Endothelial cell of umbilical vein (primary cell): ENCODE measurements at regions of chr5 and their contacts with region 1.

Region 1: GRCh38 chr5:172714491-172715421 is 56.2 kb downstream of the DUSP1 start:
- DNase-seq: peak; percentile 74
- H3K4me3 ChIP-seq: no peak overlapping the region
- H3K27ac ChIP-seq: peak overlapping the region; percentile 81
- H3K4me1 ChIP-seq: peaks cover 20% of the 10 kb centered on the region
- H3K27me3 ChIP-seq: no peaks in the 10 kb centered on the region
- CTCF ChIP-seq: peak; percentile 80 to 90
- POLR2A ChIP-seq: no peak

Region 2: DNA sequence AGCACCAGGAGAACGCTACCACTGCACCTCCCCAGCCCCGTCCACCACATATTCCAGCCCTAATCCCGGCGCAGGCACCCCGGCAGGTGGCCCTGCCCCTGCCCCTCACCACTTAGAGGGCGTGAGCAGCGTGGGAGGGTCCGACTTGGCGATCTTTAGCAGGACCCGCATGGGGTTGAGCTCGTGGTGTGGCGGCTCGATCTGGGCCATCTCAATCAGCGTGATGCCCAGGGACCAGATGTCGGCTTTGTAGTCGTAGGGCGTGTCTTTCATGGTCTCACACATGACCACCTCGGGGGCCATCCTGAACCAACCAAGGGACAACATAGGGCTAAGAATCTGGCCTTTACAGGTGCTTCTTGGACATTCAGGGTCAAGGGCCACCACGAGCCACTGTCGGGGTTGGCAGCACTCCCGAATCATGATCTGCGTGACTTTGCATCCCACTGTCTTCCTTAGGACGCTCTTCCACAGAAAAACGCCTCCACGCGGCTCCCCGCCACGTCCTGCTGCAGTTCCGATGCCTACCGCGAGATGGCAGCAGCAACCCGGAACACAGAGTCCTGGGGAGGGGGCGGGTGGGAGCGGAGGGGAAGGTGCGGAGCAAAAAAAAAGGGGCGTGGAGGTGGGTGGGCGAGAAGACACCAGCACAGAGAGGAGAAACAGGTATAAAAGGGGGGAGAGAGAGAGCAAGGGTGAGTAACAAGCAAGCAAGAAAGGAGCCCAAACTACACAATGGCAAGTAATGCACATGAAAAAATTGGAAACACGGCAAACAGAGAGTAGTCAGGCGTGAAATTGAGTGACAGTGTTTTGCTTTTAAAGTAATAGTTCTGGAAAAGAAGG is 608.0 kb before region 1 on chr5:
- CTCF ChIA-PET with region 1: no interaction called
- POLR2A ChIA-PET with region 1: no interaction called
- dilution Hi-C with region 1: no loop called
- intact Hi-C with region 1: no loop called
- DNase-seq: peak; percentile 46
- H3K4me3 ChIP-seq: no peak overlapping the region
- H3K27ac ChIP-seq: no peak overlapping the region
- H3K4me1 ChIP-seq: peaks cover 34% of the 10 kb centered on the region
- H3K27me3 ChIP-seq: no peaks in the 10 kb centered on the region
- CTCF ChIP-seq: peak; percentile 78 to 97
- POLR2A ChIP-seq: no peak

Region 3: DNA sequence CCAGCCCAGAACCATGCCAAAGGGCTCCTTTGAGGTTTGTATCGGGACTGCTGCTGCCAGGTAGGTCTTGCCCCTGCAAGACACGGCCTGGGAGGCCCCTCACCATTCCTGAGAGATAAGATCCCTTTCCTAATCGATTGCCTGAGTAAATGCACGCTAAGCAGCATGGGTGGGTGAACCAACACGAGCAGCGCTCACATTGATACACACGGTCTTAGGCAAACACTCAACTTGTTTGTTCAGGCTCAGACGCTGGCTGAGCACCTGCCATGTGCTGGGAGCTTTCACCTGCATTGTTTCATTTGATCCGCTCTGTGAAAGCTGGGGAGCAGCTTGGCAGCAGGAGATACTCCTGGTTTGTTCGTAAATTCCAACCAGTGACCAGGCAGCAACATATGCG is 150.6 kb before region 1 on chr5:
- CTCF ChIA-PET with region 1: no interaction called
- POLR2A ChIA-PET with region 1: no interaction called
- dilution Hi-C with region 1: no loop called
- intact Hi-C with region 1: no loop called
- DNase-seq: no peak
- H3K4me3 ChIP-seq: no peak overlapping the region
- H3K27ac ChIP-seq: no peak overlapping the region
- H3K4me1 ChIP-seq: no peaks in the 10 kb centered on the region
- H3K27me3 ChIP-seq: peaks cover 0 to 3% of the 10 kb centered on the region in 2 experiments
- CTCF ChIP-seq: no peak
- POLR2A ChIP-seq: no peak

Region 4: DNA sequence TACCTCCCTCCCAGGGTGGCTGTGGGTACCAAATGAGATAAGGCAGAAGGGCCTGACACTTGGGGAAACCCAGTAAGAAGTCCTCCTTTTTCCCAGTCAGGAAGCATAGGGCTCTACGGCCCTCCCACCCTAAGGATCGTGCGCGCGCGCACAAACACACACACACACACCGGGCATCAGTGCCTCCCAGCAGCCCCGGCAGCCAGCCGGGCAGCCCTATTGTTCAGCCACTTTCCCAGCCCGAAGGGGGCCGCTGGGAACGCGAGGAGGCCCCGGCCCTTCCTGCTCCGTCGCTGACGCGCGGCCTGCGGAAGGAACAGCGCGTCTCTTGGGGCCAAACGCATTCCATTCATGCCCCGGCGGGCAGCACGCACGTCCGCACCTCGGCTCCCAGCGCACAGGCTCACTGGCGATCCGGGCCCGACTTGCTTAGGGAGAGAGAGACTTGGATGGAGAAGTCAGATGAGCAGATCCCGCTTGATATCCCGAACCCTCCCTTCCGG is 33.6 kb after region 1 on chr5:
- CTCF ChIA-PET with region 1: interaction called, 6 read pairs
- POLR2A ChIA-PET with region 1: no interaction called
- dilution Hi-C with region 1: no loop called
- intact Hi-C with region 1: loop called (anchors 1 kb)
- DNase-seq: peak; percentile 96
- H3K4me3 ChIP-seq: no peak overlapping the region
- H3K27ac ChIP-seq: peak overlapping the region; percentile 79
- H3K4me1 ChIP-seq: peaks cover 13% of the 10 kb centered on the region
- H3K27me3 ChIP-seq: no peaks in the 10 kb centered on the region
- CTCF ChIP-seq: no peak
- POLR2A ChIP-seq: peak; percentile 52

Region 5: DNA sequence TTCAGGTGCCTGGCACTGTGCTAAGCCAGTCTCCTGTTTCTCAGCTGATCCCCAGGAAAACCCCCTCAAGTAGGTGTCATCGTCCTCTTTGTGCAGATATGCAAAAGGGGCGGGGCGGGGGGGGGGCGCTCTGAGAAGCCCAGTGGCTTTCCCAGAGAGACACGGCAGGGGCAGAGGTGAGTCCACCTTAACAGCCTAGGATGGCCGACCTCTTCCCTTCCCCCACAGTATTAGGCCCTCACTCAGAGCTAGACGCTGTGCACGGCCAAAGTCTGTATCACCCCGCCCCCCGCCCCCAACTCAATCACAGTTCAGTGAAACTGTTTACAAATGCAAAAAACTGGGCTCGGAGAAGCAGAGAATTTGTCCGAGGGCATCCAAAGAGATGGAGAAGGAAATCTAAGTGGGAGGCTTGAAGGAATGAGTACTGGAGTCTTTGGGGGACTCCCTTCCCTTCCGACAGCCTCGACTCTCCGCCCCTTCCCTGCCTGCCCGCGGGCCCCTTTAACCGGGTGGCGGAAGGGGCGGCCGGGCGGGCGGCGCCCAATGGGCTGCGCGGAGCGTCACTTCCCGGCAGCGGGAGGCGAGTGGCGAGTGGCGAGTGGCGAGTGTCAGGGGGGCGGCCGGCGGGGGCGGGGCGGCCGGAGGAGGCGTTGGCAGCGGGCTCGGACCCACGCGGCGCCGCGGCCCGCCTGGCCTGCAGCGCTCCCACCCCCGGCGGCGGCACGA is 119.1 kb after region 1 on chr5 and contains the start of gene ERGIC1:
- CTCF ChIA-PET with region 1: interaction called, 5 read pairs
- POLR2A ChIA-PET with region 1: no interaction called
- dilution Hi-C with region 1: no loop called
- intact Hi-C with region 1: loop called (anchors 1 kb)
- DNase-seq: peak; percentile 82
- H3K4me3 ChIP-seq: peak within 1 kb of the TSS; percentile 80 to 96 (median 80)
- H3K27ac ChIP-seq: peak within 1 kb of the TSS; percentile 71
- H3K4me1 ChIP-seq: peaks cover 12% of the 10 kb centered on the region
- H3K27me3 ChIP-seq: no peaks in the 10 kb centered on the region
- CTCF ChIP-seq: no peak
- POLR2A ChIP-seq: peak; percentile 72
- total RNA-seq, gene ERGIC1: 105 and 118 TPM in 2 replicates

Region 6: DNA sequence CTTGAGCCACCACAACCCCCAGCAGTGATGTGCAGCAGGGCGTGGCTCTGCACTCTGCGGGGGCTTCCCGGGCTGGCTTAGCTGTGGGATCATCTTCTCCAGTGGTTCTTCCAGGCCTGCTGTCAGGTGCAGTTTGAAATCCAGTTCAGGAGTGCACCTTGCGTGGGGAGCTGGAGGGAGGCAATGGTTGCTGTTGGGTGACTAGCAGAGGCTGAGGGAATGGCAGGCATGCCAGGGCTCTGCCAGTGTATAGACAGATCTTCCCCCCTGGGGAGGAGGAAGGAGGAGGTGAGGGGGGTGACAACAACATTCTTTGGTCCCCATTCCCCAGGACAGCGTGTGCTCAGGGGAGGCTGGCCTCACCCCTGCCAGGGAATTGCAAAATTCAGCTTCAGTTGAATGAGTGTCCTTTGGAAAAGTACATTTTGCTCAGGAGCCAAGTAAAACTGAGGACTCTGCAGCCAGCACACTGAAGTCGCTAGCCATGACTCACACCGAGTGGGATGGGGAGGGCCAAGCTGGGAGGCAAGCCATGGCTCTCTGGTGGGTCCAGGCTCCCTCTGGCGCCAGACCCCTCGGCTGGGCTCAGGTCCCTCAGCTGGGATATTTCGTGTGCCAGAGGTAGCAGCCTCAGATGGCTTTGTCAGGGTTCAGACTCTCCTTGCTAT is 154.3 kb after region 1 on chr5:
- CTCF ChIA-PET with region 1: interaction called, 10 read pairs
- POLR2A ChIA-PET with region 1: no interaction called
- dilution Hi-C with region 1: no loop called
- intact Hi-C with region 1: loop called (anchors 1 kb)
- DNase-seq: peak; percentile 92
- H3K4me3 ChIP-seq: no peak overlapping the region
- H3K27ac ChIP-seq: peak overlapping the region; percentile 94
- H3K4me1 ChIP-seq: peaks cover 62% of the 10 kb centered on the region
- H3K27me3 ChIP-seq: no peaks in the 10 kb centered on the region
- CTCF ChIP-seq: peak; percentile 38 to 60
- POLR2A ChIP-seq: peak; percentile 51

Region 7: DNA sequence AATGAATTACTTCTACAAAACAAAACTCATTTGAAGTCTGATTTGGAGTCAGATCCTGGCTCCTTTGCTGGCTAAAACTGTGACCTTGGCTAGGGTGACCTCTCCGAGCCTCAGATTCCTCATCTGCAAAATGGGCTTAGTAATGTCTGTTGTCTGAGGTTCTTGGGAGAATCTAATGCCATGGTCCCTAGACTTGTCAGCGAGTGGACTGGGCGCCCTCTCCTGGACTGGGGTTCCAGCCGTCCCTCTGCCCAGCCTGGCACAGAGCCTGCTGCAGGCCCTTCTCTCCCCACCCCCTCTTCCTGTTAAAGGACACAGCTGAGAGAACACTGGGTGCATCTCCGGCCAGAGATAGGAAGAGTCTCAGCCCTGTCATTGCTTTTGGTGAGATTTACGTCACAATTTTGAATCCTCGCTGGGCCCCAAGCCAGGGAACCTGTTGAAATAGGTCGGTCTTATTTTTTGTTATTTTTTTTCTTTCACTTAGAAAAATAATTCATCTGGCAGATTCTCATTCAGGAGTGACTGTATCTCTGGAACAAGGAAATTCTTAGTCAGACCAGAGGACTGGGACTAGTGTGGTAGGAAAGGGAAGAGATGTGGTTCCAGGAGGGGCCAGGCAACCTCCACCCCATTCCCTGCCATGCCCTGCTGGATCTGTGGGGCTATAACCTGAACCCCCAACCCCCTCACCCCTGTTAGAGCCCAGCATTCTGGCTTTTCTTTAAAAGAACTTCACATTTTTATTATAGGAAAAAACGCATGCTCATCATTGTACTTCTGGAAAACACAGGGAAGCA is 196.3 kb after region 1 on chr5:
- CTCF ChIA-PET with region 1: interaction called, 13 read pairs
- POLR2A ChIA-PET with region 1: no interaction called
- dilution Hi-C with region 1: no loop called
- intact Hi-C with region 1: loop called (anchors 1 kb)
- DNase-seq: peak; percentile 90
- H3K4me3 ChIP-seq: no peak overlapping the region
- H3K27ac ChIP-seq: peak overlapping the region; percentile 89
- H3K4me1 ChIP-seq: peaks cover 15% of the 10 kb centered on the region
- H3K27me3 ChIP-seq: no peaks in the 10 kb centered on the region
- CTCF ChIP-seq: peak; percentile 60 to 75
- POLR2A ChIP-seq: peak; percentile 42

Region 8: GRCh38 chr5:172984243-172984953 is 269.6 kb after region 1 on chr5:
- CTCF ChIA-PET with region 1: interaction called, 11 read pairs
- POLR2A ChIA-PET with region 1: no interaction called
- dilution Hi-C with region 1: no loop called
- intact Hi-C with region 1: no loop called
- DNase-seq: peak; percentile 92
- H3K4me3 ChIP-seq: peak overlapping the region; percentile 42 to 93 (median 92)
- H3K27ac ChIP-seq: peak overlapping the region; percentile 81
- H3K4me1 ChIP-seq: peaks cover 13% of the 10 kb centered on the region
- H3K27me3 ChIP-seq: no peaks in the 10 kb centered on the region
- CTCF ChIP-seq: peak; percentile 64 to 75
- POLR2A ChIP-seq: no peak